ENCODE measurements at regions of chr7 and their contacts with region 1.

Region 1: GRCh38 chr7:44082541-44083207 is 344 bp upstream of the POLM start:
- DNase-seq: peak; percentile 96 to 99 (median 98)
- H3K4me3 ChIP-seq: peak overlapping the region; percentile 90
- H3K27ac ChIP-seq: peak overlapping the region; percentile 73 to 74
- H3K4me1 ChIP-seq: peaks cover 15% of the 10 kb centered on the region
- H3K27me3 ChIP-seq: no peaks in the 10 kb centered on the region
- CTCF ChIP-seq: no peak
- EP300 ChIP-seq: no peak
- POLR2A ChIP-seq: peak; percentile 78

Region 2: DNA sequence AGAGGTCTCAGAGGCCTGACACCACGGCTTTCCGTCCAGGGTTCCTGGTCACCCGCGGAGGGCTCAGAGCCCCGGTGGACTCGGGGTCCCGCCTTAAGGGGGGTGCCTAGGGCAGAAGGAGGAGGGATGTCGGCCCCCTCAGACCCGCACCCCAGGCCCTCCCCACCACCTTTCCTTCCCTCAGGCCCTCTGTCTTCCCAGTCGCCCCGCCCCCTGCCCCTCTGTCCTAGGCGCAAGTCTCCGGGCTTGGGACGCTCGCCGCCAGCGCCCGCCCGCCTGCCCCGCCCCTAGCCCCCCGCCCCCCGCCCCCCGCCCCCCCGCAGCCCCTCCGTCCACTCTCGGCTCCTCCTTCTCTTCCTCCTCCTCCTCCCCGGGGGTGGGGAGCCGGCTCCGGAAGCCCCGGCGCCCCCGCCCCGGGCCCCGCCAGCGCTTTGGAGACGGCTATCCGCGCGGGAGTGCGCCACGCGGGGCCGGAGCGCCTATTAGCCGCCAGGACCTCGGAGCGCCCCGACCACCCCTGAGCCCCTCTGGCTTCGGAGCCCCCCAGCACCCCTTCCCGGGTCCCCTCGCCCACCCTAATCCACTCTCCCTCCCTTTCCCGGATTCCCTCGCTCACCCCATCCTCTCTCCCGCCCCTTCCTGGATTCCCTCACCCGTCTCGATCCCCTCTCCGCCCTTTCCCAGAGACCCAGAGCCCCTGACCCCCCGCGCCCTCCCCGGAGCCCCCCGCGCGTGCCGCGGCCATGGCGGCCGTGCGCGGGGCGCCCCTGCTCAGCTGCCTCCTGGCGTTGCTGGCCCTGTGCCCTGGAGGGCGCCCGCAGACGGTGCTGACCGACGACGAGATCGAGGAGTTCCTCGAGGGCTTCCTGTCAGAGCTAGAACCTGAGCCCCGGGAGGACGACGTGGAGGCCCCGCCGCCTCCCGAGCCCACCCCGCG is 21.5 kb after region 1 on chr7 and contains the start of gene AEBP1:
- intact Hi-C with region 1: loop called in 2 of 4 experiments (anchors 2 kb)
- DNase-seq: peak; percentile 65 to 78 (median 73)
- H3K4me3 ChIP-seq: peak within 1 kb of the TSS; percentile 71
- H3K27ac ChIP-seq: peak within 1 kb of the TSS; percentile 89 to 93
- H3K4me1 ChIP-seq: peaks cover 21% of the 10 kb centered on the region
- H3K27me3 ChIP-seq: no peaks in the 10 kb centered on the region
- CTCF ChIP-seq: no peak
- EP300 ChIP-seq: no peak
- POLR2A ChIP-seq: peak; percentile 29
- total RNA-seq, gene AEBP1: 137 to 563 (median 327) TPM

Region 3: GRCh38 chr7:44123190-44124003 is 40.7 kb after region 1 on chr7 and contains the start of gene POLD2:
- intact Hi-C with region 1: loop called in 2 of 4 experiments (anchors 5 kb)
- DNase-seq: peak; percentile 98 to 99 (median 98)
- H3K4me3 ChIP-seq: peak within 1 kb of the TSS; percentile 91
- H3K27ac ChIP-seq: peak within 1 kb of the TSS; percentile 42 to 88
- H3K4me1 ChIP-seq: peaks cover 4% of the 10 kb centered on the region
- H3K27me3 ChIP-seq: no peaks in the 10 kb centered on the region
- CTCF ChIP-seq: peak in 2 of 3 donors; percentile 7 to 10
- EP300 ChIP-seq: no peak
- POLR2A ChIP-seq: peak; percentile 69
- total RNA-seq, gene POLD2: 42.4 to 118 (median 76.9) TPM